Endothelial cell of umbilical vein (primary cell): ENCODE measurements at regions of chr19 and their contacts with region 1.

Region 1: DNA sequence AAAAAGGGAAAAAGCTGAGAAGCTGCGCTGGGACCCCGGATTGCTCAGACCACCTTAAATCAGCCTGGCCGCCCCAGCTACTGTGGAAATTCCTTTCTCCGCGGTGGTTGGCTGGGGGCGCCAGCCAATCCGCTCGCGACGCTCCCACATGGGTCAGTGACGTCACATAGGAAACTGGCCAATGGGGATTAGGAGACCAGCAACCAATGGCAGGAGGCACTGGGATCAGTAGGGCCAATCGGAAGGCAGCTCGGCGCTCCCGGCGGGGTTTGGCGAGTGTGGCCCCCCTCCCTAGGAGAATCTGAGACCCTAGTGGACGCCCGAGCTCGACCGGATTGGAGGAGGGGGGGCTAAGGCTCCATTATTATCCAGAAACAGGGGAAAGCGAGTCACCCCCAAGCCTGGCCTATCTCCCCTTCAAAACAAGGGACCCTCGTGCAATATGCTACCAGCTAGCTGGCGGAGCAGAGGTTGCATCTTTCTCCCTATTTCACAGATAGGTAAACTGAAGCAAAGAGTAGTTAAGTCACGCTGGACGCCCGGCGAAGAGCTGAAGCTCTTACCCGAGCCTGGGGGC is 6.5 kb upstream of the TLE2 start:
- DNase-seq: peak; percentile 100
- H3K4me3 ChIP-seq: peak overlapping the region; percentile 39 to 73 (median 73)
- H3K27ac ChIP-seq: peak overlapping the region; percentile 77
- H3K4me1 ChIP-seq: peaks cover 12% of the 10 kb centered on the region
- H3K27me3 ChIP-seq: peaks cover 0 to 3% of the 10 kb centered on the region in 2 experiments
- CTCF ChIP-seq: no peak
- POLR2A ChIP-seq: peak; percentile 44

Region 2: GRCh38 chr19:2236314-2237050 is 799.1 kb before region 1 on chr19 and contains the starts of genes PLEKHJ1 and SF3A2:
- CTCF ChIA-PET with region 1: no interaction called
- POLR2A ChIA-PET with region 1: no interaction called
- dilution Hi-C with region 1: no loop called
- intact Hi-C with region 1: loop called (anchors 5 kb)
- DNase-seq: peak; percentile 99
- H3K4me3 ChIP-seq: peak within 1 kb of the TSS; percentile 56 to 86 (median 80)
- H3K27ac ChIP-seq: peak within 1 kb of the TSS; percentile 66
- H3K4me1 ChIP-seq: peaks cover 41% of the 10 kb centered on the region
- H3K27me3 ChIP-seq: no peaks in the 10 kb centered on the region
- CTCF ChIP-seq: peak; percentile 99
- POLR2A ChIP-seq: peak; percentile 71
- total RNA-seq, gene PLEKHJ1: 73.4 and 82.4 TPM in 2 replicates
- total RNA-seq, gene SF3A2: 140 and 164 TPM in 2 replicates

Region 3: GRCh38 chr19:2969104-2969504 is 66.5 kb before region 1 on chr19:
- CTCF ChIA-PET with region 1: interaction called, 13 read pairs
- POLR2A ChIA-PET with region 1: interaction called, 3 read pairs
- dilution Hi-C with region 1: no loop called
- intact Hi-C with region 1: loop called (anchors 1 kb)
- DNase-seq: peak; percentile 78
- H3K4me3 ChIP-seq: no peak overlapping the region
- H3K27ac ChIP-seq: peak overlapping the region; percentile 65
- H3K4me1 ChIP-seq: peaks cover 23% of the 10 kb centered on the region
- H3K27me3 ChIP-seq: no peaks in the 10 kb centered on the region
- CTCF ChIP-seq: no peak
- POLR2A ChIP-seq: no peak

Region 4: DNA sequence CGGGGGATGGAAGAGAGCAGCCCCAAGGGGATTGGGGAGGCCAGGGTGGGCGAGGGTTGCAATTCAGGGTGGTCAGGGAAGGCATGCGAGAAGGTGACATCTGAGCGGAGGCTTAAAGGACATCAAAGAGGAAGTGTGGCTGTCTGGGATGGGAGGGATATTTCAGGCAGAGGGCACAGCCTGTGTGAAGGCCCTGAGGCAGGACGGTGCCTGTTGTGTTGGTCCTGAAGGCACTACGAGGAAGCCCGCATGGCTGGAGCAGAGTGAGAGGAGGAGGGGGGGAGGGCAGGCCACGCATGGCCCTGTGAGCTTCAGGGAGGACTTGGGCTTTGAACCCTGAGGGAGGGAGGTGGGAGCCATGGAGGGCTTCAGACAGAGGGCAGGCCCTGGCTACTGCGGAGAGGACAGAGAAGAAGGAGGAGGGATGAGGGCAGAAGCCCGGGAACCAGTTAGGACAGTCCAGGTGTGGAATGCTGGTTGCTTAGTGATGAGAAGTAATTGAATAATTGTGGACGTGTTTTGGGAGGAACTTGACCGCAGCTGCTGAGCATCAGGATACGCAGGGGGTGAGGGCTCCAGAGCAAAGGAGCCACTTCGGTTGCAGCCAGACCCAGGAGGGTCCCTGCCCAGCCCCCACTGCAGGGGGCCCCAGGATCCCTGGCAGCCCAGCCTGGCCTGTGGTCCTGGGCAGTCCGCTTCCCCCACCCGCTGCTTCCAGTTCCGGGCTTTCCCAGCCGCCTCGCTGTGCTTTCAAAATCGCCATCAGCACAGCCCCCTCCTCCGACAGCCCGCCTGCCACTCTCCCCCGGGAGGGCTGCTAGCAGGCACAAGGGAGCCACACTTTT is 52.1 kb before region 1 on chr19:
- CTCF ChIA-PET with region 1: interaction called, 6 read pairs
- POLR2A ChIA-PET with region 1: no interaction called
- dilution Hi-C with region 1: no loop called
- intact Hi-C with region 1: loop called (anchors 1 kb)
- DNase-seq: peak; percentile 64
- H3K4me3 ChIP-seq: peak overlapping the region in 2 of 3 experiments; percentile 13 to 14
- H3K27ac ChIP-seq: peak overlapping the region; percentile 70
- H3K4me1 ChIP-seq: peaks cover 19% of the 10 kb centered on the region
- H3K27me3 ChIP-seq: no peaks in the 10 kb centered on the region
- CTCF ChIP-seq: no peak
- POLR2A ChIP-seq: peak; percentile 33

Region 5: GRCh38 chr19:3094601-3095437 is 59.2 kb after region 1 on chr19:
- CTCF ChIA-PET with region 1: no interaction called
- POLR2A ChIA-PET with region 1: no interaction called
- dilution Hi-C with region 1: no loop called
- intact Hi-C with region 1: loop called (anchors 2 kb)
- DNase-seq: no peak
- H3K4me3 ChIP-seq: peak overlapping the region; percentile 64 to 99 (median 76)
- H3K27ac ChIP-seq: peak overlapping the region; percentile 51
- H3K4me1 ChIP-seq: peaks cover 36% of the 10 kb centered on the region
- H3K27me3 ChIP-seq: no peaks in the 10 kb centered on the region
- CTCF ChIP-seq: no peak
- POLR2A ChIP-seq: no peak

Region 6: DNA sequence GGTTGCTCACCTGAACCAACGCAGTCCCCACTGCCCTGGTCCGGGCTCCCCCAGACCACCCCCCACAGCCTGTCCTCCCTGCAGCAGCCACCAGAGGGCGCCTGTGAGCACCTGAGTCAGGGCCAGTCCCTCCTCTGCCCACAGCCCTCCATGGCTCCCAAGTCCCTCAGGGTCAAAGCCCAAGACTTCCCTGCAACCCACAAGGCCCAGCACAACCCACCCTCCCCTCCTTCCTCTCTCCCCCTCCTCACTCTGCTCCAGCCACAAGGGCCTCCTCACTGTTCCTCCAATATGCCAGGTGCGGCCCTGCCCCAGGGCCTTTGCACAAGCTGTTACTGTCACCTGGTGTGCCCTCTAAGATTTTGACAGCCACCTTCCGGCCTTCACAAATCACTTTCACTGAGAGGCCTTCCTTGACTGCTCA is 111.1 kb after region 1 on chr19:
- CTCF ChIA-PET with region 1: no interaction called
- POLR2A ChIA-PET with region 1: interaction called, 11 read pairs
- dilution Hi-C with region 1: no loop called
- intact Hi-C with region 1: no loop called
- DNase-seq: no peak
- H3K4me3 ChIP-seq: no peak overlapping the region
- H3K27ac ChIP-seq: no peak overlapping the region
- H3K4me1 ChIP-seq: peaks cover 13% of the 10 kb centered on the region
- H3K27me3 ChIP-seq: no peaks in the 10 kb centered on the region
- CTCF ChIP-seq: peak; percentile 83 to 94
- POLR2A ChIP-seq: no peak